ENCODE measurements at regions of chr7 and their contacts with region 1.

Region 1: DNA sequence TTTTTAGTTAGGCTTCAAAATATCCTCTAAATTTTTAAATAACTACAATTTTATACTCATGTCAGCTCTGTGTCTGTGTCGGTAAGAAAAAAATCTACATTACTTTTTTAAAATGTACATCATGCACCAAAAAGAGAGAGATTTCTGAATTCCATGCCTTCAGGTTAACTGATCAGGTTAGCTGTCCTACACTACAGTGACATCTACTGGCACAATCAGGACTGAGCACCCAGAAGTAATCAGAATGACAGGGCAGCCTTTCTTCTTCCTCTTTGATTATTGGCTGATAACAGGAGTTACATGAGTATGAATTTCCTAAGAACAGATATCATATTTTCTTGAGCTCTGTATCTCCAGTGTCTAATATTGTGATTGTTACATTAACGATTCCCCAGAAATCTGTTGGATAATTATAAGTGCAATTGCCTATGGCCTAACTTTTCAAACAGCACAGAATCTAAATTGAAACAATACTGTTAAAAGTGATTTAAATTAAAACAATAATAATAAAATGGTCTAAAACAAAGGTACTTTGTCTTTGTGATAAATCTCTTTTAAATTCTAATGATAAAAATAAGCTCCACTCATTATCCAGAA is 41.8 kb upstream of the HYCC1 start:
- DNase-seq: peak; percentile 81
- H3K4me3 Mint-ChIP-seq: no peak overlapping the region
- H3K27ac Mint-ChIP-seq: no peak overlapping the region
- H3K4me1 Mint-ChIP-seq: peaks cover under 1% of the 10 kb centered on the region
- H3K27me3 Mint-ChIP-seq: no peaks in the 10 kb centered on the region

Region 2: GRCh38 chr7:22782616-22783232 is 273.0 kb before region 1 on chr7:
- CTCF ChIA-PET with region 1: interaction called, 11 read pairs
- intact Hi-C with region 1: loop called (anchors 1 kb)
- DNase-seq: peak; percentile 88
- H3K4me3 Mint-ChIP-seq: no peak overlapping the region
- H3K27ac Mint-ChIP-seq: no peak overlapping the region
- H3K4me1 Mint-ChIP-seq: no peaks in the 10 kb centered on the region
- H3K27me3 Mint-ChIP-seq: no peaks in the 10 kb centered on the region

Region 3: GRCh38 chr7:22822486-22823141 is 233.1 kb before region 1 on chr7 and contains the start of gene TOMM7:
- CTCF ChIA-PET with region 1: interaction called, 6 read pairs
- intact Hi-C with region 1: loop called (anchors 1 kb)
- DNase-seq: peak; percentile 92
- H3K4me3 Mint-ChIP-seq: peak within 1 kb of the TSS; percentile 99
- H3K27ac Mint-ChIP-seq: peak within 1 kb of the TSS; percentile 96
- H3K4me1 Mint-ChIP-seq: peaks cover 36% of the 10 kb centered on the region
- H3K27me3 Mint-ChIP-seq: peaks cover 10% of the 10 kb centered on the region
- total RNA-seq, gene TOMM7: 269 to 297 TPM

Region 4: DNA sequence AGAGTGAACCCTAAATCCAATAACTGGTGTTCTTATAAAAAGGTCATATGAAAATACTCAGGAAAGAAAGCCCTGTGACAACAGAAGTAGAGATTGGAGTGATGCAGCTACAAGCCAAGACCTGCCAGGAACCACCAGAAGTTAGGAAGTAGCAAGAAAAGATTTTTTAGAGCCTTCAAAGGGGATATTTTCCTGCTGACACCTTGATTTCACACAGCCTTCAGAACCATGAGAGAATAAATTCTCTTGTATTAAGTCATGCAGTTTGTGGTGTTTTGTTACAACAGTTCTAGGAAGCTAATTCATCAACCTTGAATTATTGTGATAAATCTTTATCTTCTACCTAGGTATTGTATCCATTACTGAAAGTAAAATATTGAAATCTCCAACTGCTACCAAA is 122.8 kb before region 1 on chr7:
- CTCF ChIA-PET with region 1: no interaction called
- intact Hi-C with region 1: loop called (anchors 2 kb)
- DNase-seq: no peak
- H3K4me3 Mint-ChIP-seq: no peak overlapping the region
- H3K27ac Mint-ChIP-seq: no peak overlapping the region
- H3K4me1 Mint-ChIP-seq: no peaks in the 10 kb centered on the region
- H3K27me3 Mint-ChIP-seq: peaks cover 4% of the 10 kb centered on the region

Region 5: GRCh38 chr7:23043441-23043840 is 12.2 kb before region 1 on chr7:
- CTCF ChIA-PET with region 1: interaction called, 20 read pairs
- intact Hi-C with region 1: no loop called
- DNase-seq: no peak
- H3K4me3 Mint-ChIP-seq: no peak overlapping the region
- H3K27ac Mint-ChIP-seq: no peak overlapping the region
- H3K4me1 Mint-ChIP-seq: no peaks in the 10 kb centered on the region
- H3K27me3 Mint-ChIP-seq: no peaks in the 10 kb centered on the region

Region 6: DNA sequence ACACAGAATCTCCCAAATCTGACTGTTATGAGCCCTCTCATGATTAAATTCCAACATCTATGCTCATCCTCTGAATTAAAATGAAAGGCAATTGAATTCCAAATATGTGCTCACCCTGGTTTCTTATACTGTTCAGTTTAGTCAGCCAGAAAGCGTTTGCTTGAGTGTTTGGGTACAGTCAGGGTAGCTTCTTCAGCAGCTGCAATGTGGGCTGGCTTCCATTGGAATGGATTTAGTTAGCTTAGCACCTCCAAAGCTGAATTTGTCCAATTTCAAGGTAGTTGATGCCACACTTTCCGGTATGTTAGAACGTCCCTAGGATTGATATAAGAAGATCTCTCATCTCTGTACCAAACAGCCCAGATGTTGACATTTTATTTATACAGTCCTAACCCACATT is 59.2 kb after region 1 on chr7:
- CTCF ChIA-PET with region 1: no interaction called
- intact Hi-C with region 1: no loop called
- DNase-seq: no peak
- H3K4me3 Mint-ChIP-seq: no peak overlapping the region
- H3K27ac Mint-ChIP-seq: no peak overlapping the region
- H3K4me1 Mint-ChIP-seq: peaks cover 7% of the 10 kb centered on the region
- H3K27me3 Mint-ChIP-seq: no peaks in the 10 kb centered on the region

Measured in activated naive CD4-positive, alpha-beta T cell treated with anti-CD3 and anti-CD28 coated beads for 36 hours (primary cell).